Activated CD4-positive, alpha-beta memory T cell treated with anti-CD3 and anti-CD28 coated beads for 36 hours (primary cell): ENCODE measurements at regions of chr15 and their contacts with region 1.

Region 1: DNA sequence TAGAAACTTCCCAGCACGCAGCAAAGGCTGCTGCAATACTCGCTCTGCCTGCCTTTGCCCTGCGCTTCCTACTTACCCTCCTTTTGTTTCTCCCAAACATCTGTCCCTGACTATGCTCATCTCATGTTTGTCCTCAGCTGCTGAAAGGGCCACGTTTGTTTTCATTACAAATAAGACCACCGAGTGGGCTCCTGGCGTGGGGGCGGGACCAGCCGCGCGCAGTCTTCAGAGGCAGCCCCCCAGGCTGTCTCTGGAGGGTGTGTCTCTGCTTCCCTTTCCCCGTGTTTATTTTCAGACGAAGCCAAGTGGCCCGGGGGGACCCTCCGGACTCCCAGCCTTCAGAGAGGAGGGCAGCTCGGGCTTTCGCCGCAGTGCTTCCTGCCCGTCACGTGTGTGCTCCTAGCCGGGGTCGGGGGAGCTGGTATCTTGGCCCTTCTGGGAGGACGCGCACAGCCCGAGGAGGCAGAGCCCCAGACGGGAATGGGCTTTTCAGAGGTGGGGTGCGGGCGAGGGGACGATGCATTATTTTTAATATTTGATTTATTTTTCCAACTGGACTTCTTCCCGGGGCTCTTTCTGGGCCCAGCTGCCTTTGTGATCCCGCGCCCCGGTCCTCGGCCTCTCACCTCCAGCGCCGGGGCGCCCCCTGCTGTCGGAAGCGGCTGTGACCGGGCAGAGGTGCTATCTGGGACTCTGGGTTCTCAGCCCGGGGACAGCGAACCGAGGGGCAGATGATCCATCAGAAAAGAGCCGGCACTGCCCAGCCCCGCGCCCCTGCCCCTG is 70.0 kb upstream of the CGNL1 start:
- DNase-seq: peak; percentile 86
- H3K4me3 Mint-ChIP-seq: peak overlapping the region; percentile 28
- H3K27ac Mint-ChIP-seq: no peak overlapping the region
- H3K4me1 Mint-ChIP-seq: peaks cover 6% of the 10 kb centered on the region
- H3K27me3 Mint-ChIP-seq: peaks cover 5% of the 10 kb centered on the region

Region 2: DNA sequence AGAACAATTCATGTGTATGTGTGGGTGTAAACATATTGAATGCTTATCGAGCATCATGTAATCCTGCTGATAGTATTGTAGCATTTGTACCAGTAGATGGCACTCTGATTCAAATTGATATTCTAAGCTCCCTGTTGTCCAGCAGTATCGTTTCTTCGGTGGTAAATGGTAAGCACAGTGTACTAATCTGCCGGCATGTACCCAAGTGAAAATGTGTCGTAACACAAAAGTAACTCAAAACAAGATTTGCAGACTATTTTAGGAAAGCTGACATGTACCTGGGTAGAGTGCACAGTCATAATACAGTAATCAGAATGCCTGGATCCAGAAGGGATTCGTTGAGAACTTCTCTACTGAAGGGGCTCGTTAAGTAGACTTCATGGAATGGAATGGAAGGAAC is 809.7 kb before region 1 on chr15:
- CTCF ChIA-PET with region 1: interaction called, 31 read pairs
- POLR2A ChIA-PET with region 1: no interaction called
- intact Hi-C with region 1: loop called (anchors 1 kb)
- DNase-seq: no peak
- H3K4me3 Mint-ChIP-seq: no peak overlapping the region
- H3K27ac Mint-ChIP-seq: no peak overlapping the region
- H3K4me1 Mint-ChIP-seq: no peaks in the 10 kb centered on the region
- H3K27me3 Mint-ChIP-seq: peaks cover 10% of the 10 kb centered on the region

Region 3: DNA sequence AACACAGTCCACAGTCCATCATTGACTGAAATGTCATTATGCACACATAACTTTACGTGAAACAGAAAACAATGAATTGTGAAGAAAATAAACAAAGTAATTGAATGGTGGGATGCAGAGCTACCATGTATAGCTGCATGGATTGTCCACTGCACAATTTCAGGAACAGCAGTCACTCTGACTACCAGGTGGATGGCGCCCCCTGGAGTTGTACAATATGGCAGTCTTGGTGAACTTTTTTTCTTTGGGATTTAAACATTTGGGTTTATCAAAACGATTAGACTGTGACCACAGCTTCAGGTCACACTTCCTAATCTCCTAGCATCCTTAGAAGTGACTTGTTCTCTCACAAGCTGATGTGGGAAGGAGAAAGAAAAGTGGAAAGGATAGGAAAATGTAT is 436.8 kb before region 1 on chr15:
- CTCF ChIA-PET with region 1: interaction called, 14 read pairs
- POLR2A ChIA-PET with region 1: no interaction called
- intact Hi-C with region 1: no loop called
- DNase-seq: peak; percentile 65
- H3K4me3 Mint-ChIP-seq: no peak overlapping the region
- H3K27ac Mint-ChIP-seq: no peak overlapping the region
- H3K4me1 Mint-ChIP-seq: no peaks in the 10 kb centered on the region
- H3K27me3 Mint-ChIP-seq: no peaks in the 10 kb centered on the region

Region 4: GRCh38 chr15:57017024-57017423 is 289.3 kb before region 1 on chr15:
- CTCF ChIA-PET with region 1: no interaction called
- POLR2A ChIA-PET with region 1: no interaction called
- intact Hi-C with region 1: loop called (anchors 10 kb)
- DNase-seq: no peak
- H3K4me3 Mint-ChIP-seq: no peak overlapping the region
- H3K27ac Mint-ChIP-seq: no peak overlapping the region
- H3K4me1 Mint-ChIP-seq: peaks cover 19% of the 10 kb centered on the region
- H3K27me3 Mint-ChIP-seq: no peaks in the 10 kb centered on the region

Region 5: DNA sequence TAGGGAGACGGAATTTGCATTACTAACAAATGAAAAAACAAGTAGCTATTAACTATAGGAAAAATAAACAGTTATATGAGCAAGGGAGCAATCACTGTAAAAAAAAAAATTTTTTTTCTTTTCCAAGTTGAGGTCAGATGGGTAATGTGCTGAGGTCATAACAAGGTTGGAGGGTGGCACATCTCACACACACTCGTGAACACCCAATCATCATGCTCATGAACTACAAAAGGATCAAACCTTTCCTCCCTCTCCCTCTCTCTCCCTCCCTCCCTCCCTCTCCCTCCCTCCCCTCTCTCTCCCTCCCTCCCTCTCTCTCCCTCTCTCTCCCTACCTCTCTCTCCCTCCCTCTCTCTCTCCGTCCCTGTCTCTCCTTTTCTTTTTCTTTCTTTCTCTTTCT is 27.9 kb before region 1 on chr15:
- CTCF ChIA-PET with region 1: no interaction called
- POLR2A ChIA-PET with region 1: no interaction called
- intact Hi-C with region 1: no loop called
- DNase-seq: no peak
- H3K4me3 Mint-ChIP-seq: no peak overlapping the region
- H3K27ac Mint-ChIP-seq: no peak overlapping the region
- H3K4me1 Mint-ChIP-seq: no peaks in the 10 kb centered on the region
- H3K27me3 Mint-ChIP-seq: no peaks in the 10 kb centered on the region

Region 6: DNA sequence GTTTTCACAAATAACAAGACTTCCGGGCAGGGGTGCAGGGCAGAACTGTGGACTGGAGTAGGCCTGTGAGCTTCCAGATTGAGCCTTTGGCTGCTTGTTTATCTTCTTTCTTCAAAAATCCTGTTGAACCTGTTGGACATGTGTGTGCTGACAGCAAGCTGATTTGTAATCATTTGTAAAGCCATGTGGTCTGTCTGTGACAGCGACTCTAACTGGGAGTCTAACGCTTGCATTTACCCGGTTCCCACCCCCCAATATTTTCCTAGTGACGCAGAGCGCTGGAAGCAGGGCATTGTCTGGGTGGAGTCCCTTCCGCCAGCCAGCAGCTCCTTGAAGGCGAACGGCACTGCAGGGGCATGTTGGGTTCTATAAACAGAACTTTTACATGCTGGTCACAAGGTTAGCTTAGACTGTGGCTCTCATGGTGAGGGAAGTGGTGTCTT is 199.6 kb after region 1 on chr15:
- CTCF ChIA-PET with region 1: no interaction called
- POLR2A ChIA-PET with region 1: no interaction called
- intact Hi-C with region 1: no loop called
- DNase-seq: no peak
- H3K4me3 Mint-ChIP-seq: no peak overlapping the region
- H3K27ac Mint-ChIP-seq: no peak overlapping the region
- H3K4me1 Mint-ChIP-seq: no peaks in the 10 kb centered on the region
- H3K27me3 Mint-ChIP-seq: no peaks in the 10 kb centered on the region